ENCODE measurements at regions of chr11 and their contacts with region 1.

Region 1: GRCh38 chr11:11787305-11788062 is 54.3 kb upstream of the USP47 start:
- DNase-seq: peak; percentile 85
- ATAC-seq: peak; percentile 97
- H3K4me3 ChIP-seq: no peak overlapping the region
- H3K27ac ChIP-seq: no peak overlapping the region
- H3K4me1 ChIP-seq: no peaks in the 10 kb centered on the region
- H3K27me3 ChIP-seq: no peaks in the 10 kb centered on the region
- CTCF ChIP-seq: peak; percentile 91

Region 2: DNA sequence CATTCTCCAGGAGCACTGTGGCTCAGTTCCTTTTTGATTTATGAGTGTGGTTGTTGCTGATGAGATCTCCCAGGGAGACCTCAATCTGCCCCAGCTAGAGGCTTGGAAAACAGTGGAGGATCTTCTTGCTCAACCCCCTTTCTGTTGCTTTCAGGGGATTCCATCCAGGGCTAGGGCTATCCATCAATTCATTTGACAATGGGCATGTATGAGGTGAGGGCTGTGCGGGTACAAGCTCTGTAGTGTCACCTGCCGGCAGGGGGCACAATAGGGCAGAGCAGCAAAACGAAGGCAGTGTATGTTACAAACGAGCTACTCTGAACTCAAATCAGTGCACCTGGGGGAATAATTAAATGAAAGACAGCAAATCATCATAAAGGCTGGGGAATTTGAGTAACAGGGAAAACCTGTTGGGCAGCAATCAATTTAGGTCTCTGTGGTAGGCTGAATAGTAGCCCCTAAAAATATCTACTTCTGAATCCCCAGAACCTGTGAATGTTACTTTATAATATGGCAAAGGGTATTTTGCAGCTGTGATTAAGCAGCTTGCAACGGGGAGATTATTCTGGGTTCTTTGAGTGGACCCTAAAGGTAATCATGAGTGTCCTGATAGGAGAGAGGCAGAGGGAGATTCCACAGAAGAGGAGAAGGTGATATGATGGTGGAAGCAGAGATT is 759.3 kb before region 1 on chr11:
- CTCF ChIA-PET with region 1: interaction called, 17 read pairs
- POLR2A ChIA-PET with region 1: interaction called, 16 read pairs
- intact Hi-C with region 1: loop called (anchors 1 kb)
- DNase-seq: peak; percentile 73
- ATAC-seq: peak; percentile 87
- H3K4me3 ChIP-seq: no peak overlapping the region
- H3K27ac ChIP-seq: no peak overlapping the region
- H3K4me1 ChIP-seq: peaks cover 17% of the 10 kb centered on the region
- H3K27me3 ChIP-seq: 0 out of 2 replicates have a peak, but pooled peaks cover 3% of the 10 kb centered on the region
- CTCF ChIP-seq: peak; percentile 93

Region 3: GRCh38 chr11:11493698-11494097 is 293.8 kb before region 1 on chr11:
- CTCF ChIA-PET with region 1: no interaction called
- POLR2A ChIA-PET with region 1: no interaction called
- intact Hi-C with region 1: loop called (anchors 1 kb)
- DNase-seq: no peak
- ATAC-seq: no peak; the same call in 1 of the 2 replicates
- H3K4me3 ChIP-seq: no peak overlapping the region
- H3K27ac ChIP-seq: no peak overlapping the region
- H3K4me1 ChIP-seq: no peaks in the 10 kb centered on the region
- H3K27me3 ChIP-seq: no peaks in the 10 kb centered on the region
- CTCF ChIP-seq: no peak

Region 4: DNA sequence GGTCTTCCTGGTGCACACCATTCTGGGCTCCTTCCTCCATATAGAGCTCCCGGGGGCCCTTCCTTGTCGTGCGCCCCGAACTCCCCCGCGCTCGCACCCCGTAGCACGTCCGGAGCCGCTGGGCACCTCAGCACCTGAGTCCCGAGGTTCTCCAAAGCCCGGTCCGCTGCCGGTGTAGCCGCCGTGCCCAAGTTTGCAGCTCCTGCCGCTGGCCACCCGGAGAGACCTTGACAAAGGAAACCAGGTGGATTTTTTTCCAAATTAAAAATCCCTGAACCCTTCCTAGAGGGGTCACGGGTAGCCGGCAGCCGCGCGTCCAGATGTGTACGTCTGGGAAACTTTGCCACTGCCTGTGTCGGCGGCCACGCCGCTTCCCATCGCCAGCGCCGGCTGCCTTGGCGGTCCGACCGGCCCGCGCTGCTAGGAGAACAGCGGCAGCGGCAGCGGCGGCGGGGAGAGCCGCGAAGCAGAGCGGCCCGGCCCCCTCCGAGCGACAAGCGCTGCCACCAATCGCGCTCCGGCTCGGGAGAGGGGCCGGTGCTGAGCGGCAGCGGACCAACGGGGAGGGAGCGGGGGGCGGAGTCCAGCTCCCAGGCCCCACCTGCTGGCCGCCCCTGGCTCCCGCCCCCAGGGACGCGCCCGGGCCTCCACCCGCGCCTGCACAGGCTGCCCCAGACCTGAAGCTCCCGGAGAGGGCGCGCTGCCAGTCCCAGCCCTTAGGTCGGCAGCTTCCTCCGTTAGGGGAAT is 165.7 kb before region 1 on chr11 and contains the start of gene GALNT18:
- CTCF ChIA-PET with region 1: interaction called, 8 read pairs
- POLR2A ChIA-PET with region 1: no interaction called
- intact Hi-C with region 1: loop called (anchors 2 kb)
- DNase-seq: peak; percentile 92
- ATAC-seq: peak; percentile 82
- H3K4me3 ChIP-seq: peak within 1 kb of the TSS; percentile 96
- H3K27ac ChIP-seq: no peak within 1 kb of the TSS
- H3K4me1 ChIP-seq: peaks cover 23% of the 10 kb centered on the region
- H3K27me3 ChIP-seq: no peaks in the 10 kb centered on the region
- CTCF ChIP-seq: peak; percentile 40; the same call in 1 of the 2 replicates
- total RNA-seq, gene GALNT18: 34.5 and 41.1 TPM in 2 replicates

Region 5: GRCh38 chr11:11635443-11635842 is 152.0 kb before region 1 on chr11:
- CTCF ChIA-PET with region 1: interaction called, 4 read pairs
- POLR2A ChIA-PET with region 1: no interaction called
- intact Hi-C with region 1: loop called (anchors 1 kb)
- DNase-seq: no peak
- ATAC-seq: 0 out of 2 replicates have a peak, but pooled peaks have one; percentile 40
- H3K4me3 ChIP-seq: no peak overlapping the region
- H3K27ac ChIP-seq: no peak overlapping the region
- H3K4me1 ChIP-seq: no peaks in the 10 kb centered on the region
- H3K27me3 ChIP-seq: no peaks in the 10 kb centered on the region
- CTCF ChIP-seq: 0 out of 2 replicates have a peak, but pooled peaks have one; percentile 12

Region 6: DNA sequence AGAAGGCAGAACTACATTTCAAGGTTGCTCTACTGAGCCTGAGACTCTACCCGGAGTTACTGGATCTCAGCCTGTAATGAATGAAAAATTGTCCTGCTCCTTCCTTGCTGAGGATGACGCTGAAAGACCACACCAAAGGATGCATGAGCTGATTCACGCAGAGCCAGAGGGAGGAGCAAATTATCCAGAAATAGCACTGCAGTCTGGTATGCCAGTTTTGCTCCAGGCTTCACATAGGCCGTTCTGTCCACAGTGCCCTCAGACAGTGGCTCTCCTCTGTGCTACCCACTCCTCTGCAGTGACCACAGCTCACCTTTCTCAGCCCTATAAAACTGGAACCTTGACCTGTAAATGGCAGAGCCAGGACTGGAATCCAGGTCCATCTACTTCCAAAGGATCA is 86.4 kb before region 1 on chr11:
- CTCF ChIA-PET with region 1: interaction called, 3 read pairs
- POLR2A ChIA-PET with region 1: no interaction called
- intact Hi-C with region 1: loop called (anchors 1 kb)
- DNase-seq: peak; percentile 51
- ATAC-seq: peak; percentile 67
- H3K4me3 ChIP-seq: no peak overlapping the region
- H3K27ac ChIP-seq: no peak overlapping the region
- H3K4me1 ChIP-seq: peaks cover 2% of the 10 kb centered on the region; the same call in 1 of the 2 replicates
- H3K27me3 ChIP-seq: no peaks in the 10 kb centered on the region
- CTCF ChIP-seq: no peak; the same call in 1 of the 2 replicates

Region 7: GRCh38 chr11:11748706-11749365 is 38.6 kb before region 1 on chr11:
- CTCF ChIA-PET with region 1: no interaction called
- POLR2A ChIA-PET with region 1: no interaction called
- intact Hi-C with region 1: loop called (anchors 2 kb)
- DNase-seq: peak; percentile 82
- ATAC-seq: peak; percentile 81
- H3K4me3 ChIP-seq: 0 out of 2 replicates have a peak overlapping the region, but pooled peaks have one; percentile 3
- H3K27ac ChIP-seq: peak overlapping the region; percentile 47
- H3K4me1 ChIP-seq: peaks cover 37% of the 10 kb centered on the region
- H3K27me3 ChIP-seq: no peaks in the 10 kb centered on the region
- CTCF ChIP-seq: no peak

Region 8: GRCh38 chr11:12478743-12479142 is 691.3 kb after region 1 on chr11:
- CTCF ChIA-PET with region 1: no interaction called
- POLR2A ChIA-PET with region 1: no interaction called
- intact Hi-C with region 1: no loop called
- DNase-seq: no peak
- ATAC-seq: no peak
- H3K4me3 ChIP-seq: no peak overlapping the region
- H3K27ac ChIP-seq: no peak overlapping the region
- H3K4me1 ChIP-seq: no peaks in the 10 kb centered on the region
- H3K27me3 ChIP-seq: no peaks in the 10 kb centered on the region
- CTCF ChIP-seq: no peak